ENCODE measurements at regions of chr11 and their contacts with region 1.

Region 1: DNA sequence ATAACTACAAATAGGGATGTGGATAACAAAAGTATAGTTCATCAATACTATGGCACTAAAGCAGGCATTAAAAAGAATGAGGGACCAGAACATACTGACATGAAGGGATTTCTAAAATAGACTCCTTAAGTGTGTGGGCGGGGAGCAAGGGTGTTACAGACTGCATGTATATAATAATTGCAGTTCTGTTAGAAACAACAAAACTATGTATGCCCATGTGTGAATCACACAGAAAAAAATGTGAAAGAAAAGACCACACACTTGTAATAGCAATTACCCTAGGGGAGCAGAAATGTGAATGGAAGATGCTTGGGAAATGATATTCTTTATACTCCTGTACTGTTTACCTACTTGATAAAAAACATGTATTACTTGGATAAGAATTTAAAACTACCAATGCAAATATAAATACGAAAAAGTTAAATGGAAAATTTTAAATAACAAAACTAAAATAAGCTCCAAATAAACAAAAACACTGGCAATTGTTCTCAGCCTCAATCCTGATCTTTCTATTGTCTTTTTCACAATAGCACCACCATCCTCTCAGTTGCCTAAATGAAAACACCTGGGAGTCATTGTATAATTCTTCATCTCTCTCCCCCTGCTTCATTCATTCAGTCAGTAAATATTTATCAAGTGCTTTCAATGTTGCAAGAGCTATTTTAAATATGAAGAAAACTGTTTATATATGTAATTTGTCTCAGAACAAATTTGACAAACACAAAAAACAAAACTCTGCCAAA is 129.8 kb downstream of the FCHSD2 start:
- DNase-seq: no peak
- H3K4me3 ChIP-seq: no peak overlapping the region
- H3K27ac ChIP-seq: no peak overlapping the region
- H3K4me1 ChIP-seq: no peaks in the 10 kb centered on the region
- H3K27me3 ChIP-seq: no peaks in the 10 kb centered on the region
- CTCF ChIP-seq: no peak
- EP300 ChIP-seq: no peak
- POLR2A ChIP-seq: no peak

Region 2: DNA sequence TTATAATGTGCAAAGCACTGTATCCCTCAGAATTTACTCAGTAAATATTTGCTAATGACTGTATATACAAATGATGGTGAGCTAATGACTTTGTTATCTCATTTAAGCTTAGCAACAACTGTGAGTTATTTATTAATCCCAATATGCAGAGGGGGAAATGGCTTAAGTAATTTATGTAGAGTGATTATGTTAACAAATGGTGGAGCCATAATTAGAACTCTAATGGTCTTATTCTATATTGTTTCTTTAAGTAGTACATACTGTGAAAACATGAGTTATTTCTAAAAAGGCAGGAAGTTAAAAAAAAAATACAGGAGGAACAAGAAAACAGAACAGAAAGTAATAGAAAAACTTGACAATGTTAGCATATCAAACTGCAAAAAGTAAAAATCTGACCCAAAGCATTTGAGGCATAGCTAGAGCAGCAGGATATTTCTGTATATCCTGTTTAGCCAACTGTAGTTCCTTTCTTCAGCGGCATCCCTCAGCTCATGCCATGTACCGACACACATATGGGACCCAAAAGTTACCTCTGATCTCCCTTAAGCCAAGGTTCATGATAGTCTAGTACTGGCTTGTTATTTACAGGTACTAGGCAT is 35.6 kb after region 1 on chr11:
- in situ Hi-C with region 1: no loop called
- intact Hi-C with region 1: no loop called
- DNase-seq: no peak
- H3K4me3 ChIP-seq: no peak overlapping the region
- H3K27ac ChIP-seq: peak overlapping the region in 3 of 4 donors; percentile 14 to 62 (median 38)
- H3K4me1 ChIP-seq: peaks cover 0 to 24% (median 7%) of the 10 kb centered on the region in 4 donors
- H3K27me3 ChIP-seq: no peaks in the 10 kb centered on the region
- CTCF ChIP-seq: no peak
- EP300 ChIP-seq: no peak
- POLR2A ChIP-seq: no peak

Region 3: GRCh38 chr11:74226907-74227306 is 1214.6 kb after region 1 on chr11:
- in situ Hi-C with region 1: no loop called
- intact Hi-C with region 1: loop called (anchors 10 kb)
- DNase-seq: no peak
- H3K4me3 ChIP-seq: no peak overlapping the region
- H3K27ac ChIP-seq: no peak overlapping the region
- H3K4me1 ChIP-seq: no peaks in the 10 kb centered on the region
- H3K27me3 ChIP-seq: no peaks in the 10 kb centered on the region
- CTCF ChIP-seq: no peak
- EP300 ChIP-seq: no peak
- POLR2A ChIP-seq: no peak